Dendritic cell treated with granulocyte-macrophage colony-stimulating factor and Interleukin-4, amounts not matched to agents 40 ng/mL and 50 ng/mL, for 4 days (primary cell): ENCODE measurements at regions of chr3 and their contacts with region 1.

Region 1: GRCh38 chr3:141231101-141231935 is at the start of gene PXYLP1:
- H3K4me3 Mint-ChIP-seq: peak within 1 kb of the TSS; percentile 80
- H3K27ac Mint-ChIP-seq: peak within 1 kb of the TSS; percentile 82
- H3K4me1 Mint-ChIP-seq: peaks cover 59% of the 10 kb centered on the region
- H3K27me3 Mint-ChIP-seq: peaks cover 16% of the 10 kb centered on the region

Region 2: DNA sequence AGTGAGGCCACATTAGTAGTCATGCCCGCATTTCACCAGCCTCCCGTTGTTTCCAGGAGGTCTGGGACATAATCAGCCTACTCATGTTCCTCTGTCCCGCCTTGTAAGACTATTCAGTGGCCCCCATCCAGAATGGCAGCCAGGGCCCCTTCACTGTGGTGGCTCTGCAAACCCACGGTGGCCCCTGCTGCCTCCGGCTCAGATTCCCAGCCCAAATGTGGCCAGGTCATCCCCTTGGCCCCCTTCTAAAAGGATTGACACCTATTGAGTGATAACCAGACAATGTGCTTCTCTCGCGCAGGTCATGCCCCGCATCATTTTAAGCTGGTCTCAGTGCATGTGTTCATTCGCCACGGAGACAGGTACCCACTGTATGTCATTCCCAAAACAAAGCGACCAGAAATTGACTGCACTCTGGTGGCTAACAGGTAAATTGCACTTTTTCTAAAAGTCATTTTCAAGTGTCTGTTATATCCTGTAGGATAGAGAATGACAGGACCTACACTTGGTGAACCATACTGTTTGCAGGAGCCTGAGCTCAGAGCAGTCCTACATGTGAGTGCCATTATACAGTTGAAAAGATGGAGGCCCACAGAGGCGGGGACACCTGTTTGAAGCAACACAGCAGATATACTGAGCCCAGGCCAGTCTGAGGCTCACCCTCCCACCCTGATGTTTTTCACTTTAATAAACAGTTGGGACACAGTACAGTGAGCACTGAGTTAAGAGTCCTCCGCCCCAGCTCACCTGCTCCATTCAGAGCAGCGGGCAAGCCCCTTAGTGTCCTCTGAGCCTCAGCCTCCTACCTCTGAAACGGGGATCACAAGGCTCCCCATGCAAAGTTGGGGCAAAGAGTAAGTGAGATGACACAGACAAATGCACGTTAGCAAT is 48.0 kb after region 1 on chr3:
- intact Hi-C with region 1: loop called (anchors 5 kb)
- H3K4me3 Mint-ChIP-seq: no peak overlapping the region
- H3K27ac Mint-ChIP-seq: no peak overlapping the region
- H3K4me1 Mint-ChIP-seq: peaks cover 11% of the 10 kb centered on the region
- H3K27me3 Mint-ChIP-seq: no peaks in the 10 kb centered on the region

Region 3: DNA sequence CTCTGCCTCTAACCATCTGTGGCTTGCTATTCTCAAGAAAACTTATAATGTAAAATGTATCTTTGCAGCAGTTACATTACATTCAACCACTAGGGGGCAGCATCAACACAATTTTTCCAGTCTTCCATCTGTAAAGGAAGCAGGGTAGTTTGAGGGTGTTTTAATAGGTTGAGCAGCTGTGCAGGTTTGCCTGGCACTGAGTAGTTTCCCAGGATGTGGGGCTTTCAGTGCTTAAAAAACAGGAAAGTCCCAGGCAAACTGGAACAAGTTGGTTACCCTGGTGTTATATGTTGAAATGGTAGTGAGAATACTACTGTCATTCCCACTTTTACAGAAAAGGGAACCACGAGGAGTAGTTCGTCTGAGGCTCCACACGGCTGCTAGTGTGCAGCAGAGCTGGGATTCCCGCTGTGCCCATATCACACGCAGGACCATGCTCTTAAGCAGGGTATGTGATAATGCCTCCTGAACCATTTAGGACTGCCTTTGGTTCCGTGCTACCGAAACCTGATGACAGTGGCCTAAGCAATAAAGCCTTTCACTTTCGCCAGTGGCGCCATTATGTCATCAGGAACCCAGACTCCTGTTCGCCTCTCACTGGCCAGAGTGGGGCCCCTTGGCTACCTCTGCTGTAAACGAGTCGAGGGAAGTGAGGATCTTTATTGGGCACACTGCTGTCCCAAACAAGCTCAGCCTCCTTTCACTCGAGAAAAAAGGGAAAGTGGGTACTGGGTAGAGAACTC is 72.3 kb after region 1 on chr3:
- intact Hi-C with region 1: loop called (anchors 5 kb)
- H3K4me3 Mint-ChIP-seq: no peak overlapping the region
- H3K27ac Mint-ChIP-seq: peak overlapping the region; percentile 98
- H3K4me1 Mint-ChIP-seq: peaks cover 56% of the 10 kb centered on the region
- H3K27me3 Mint-ChIP-seq: no peaks in the 10 kb centered on the region

Region 4: DNA sequence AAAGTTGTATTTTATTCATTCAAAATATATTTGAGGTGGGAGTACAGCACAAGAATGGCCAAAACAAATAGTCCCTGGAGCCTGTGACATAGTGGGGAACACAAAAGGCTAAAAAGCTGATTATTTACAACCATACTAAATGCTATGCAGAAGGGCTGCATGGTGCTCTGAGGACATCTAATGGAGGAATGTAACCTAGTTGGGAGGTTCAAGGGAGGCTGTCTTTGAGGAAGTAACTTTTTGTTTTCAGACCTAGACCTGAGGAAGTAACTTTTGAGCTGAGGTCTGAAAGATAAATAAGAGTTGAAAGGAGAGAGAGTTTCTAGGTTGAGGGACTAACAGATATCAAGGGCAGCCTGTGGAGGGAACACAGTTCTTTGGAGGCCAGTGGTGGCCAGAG is 220.7 kb after region 1 on chr3:
- intact Hi-C with region 1: loop called (anchors 10 kb)
- H3K4me3 Mint-ChIP-seq: no peak overlapping the region
- H3K27ac Mint-ChIP-seq: no peak overlapping the region
- H3K4me1 Mint-ChIP-seq: peaks cover 13% of the 10 kb centered on the region
- H3K27me3 Mint-ChIP-seq: no peaks in the 10 kb centered on the region